H1 (cell line): ENCODE measurements at regions of chr3 and their contacts with region 1.

Region 1: DNA sequence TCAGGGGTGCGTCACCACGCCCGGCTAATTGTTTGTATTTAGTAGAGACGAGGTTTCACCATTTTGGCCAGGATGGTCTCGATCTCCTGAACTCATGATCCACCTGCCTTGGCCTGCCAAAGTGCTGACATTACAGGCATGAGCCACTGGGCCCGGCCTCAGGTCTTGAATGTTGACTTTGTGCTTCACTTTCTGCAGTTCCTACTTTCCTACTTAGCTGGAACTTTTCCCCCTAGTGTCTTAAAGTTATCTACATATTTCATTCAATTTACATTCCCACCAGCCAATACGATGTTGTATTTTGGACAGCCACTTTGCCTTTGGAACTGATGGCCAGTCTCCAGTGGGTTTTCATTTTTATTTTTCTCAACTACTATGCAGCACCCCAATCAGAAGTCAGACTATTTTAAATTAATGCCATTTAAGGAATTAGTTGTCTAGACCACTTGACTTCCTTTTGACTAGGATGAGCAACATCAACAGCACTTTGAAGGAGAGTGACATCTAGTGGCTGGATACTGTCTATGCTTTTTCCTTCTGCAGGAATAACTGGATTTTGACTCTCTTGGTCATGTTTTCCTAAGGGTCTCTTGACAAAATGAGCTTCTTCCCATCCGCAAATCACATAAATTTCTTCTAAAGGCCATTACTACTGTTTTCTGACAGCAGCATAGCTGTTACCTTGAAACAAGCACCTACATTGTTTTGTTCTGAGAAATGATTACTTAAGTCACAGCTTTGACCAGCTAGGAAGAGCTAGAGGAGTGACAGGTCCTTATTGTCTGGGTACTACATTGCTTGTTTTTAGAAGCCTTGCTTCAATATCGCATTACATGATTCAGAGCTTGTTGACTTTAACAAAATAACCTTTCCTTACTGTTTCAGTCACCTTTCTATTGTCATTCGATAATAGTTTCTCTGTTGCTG is 140.2 kb downstream of the ITPR1 start:
- DNase-seq: no peak
- H3K4me3 ChIP-seq: no peak overlapping the region
- H3K27ac ChIP-seq: no peak overlapping the region
- H3K4me1 ChIP-seq: no peaks in the 10 kb centered on the region; a peak in 1 of 7 replicates
- H3K27me3 ChIP-seq: no peaks in the 10 kb centered on the region
- CTCF ChIP-seq: peak in 2 of 3 experiments; percentile 73 to 78; a peak in 3 of 4 replicates
- EP300 ChIP-seq: no peak
- POLR2A ChIP-seq: no peak
- RAD21 ChIP-seq: peak; percentile 87 to 90

Region 2: GRCh38 chr3:4334548-4334947 is 298.8 kb before region 1 on chr3:
- CTCF ChIA-PET with region 1: interaction called, 21 read pairs
- POLR2A ChIA-PET with region 1: interaction called, 4 read pairs
- DNase-seq: no peak
- H3K4me3 ChIP-seq: no peak overlapping the region
- H3K27ac ChIP-seq: no peak overlapping the region
- H3K4me1 ChIP-seq: peaks cover 1 to 11% (median 6%) of the 10 kb centered on the region in 4 experiments; a peak in 4 of 7 replicates
- H3K27me3 ChIP-seq: no peaks in the 10 kb centered on the region
- CTCF ChIP-seq: peak in 2 of 3 experiments; percentile 30 to 48; a peak in 3 of 4 replicates
- EP300 ChIP-seq: no peak
- POLR2A ChIP-seq: no peak
- RAD21 ChIP-seq: peak; percentile 26 to 40; a peak in 3 of 4 replicates

Region 3: DNA sequence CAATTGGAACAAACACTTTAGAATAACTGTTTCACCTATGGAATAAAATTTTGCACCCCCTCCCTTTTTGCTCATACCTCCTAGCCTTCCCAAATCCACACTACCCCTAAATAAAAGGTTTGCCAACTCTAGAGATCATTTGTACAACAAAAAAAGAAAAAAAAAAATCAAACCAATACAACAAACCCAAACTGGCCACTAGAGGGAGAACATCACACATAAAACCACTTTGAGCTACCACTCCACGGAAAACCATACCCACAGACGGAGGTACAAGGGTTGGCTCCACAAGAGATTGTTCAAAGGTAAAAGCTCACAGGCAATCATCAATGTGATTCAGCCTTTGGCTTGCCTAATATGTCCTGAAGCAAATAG is 282.6 kb before region 1 on chr3:
- CTCF ChIA-PET with region 1: interaction called, 47 read pairs
- POLR2A ChIA-PET with region 1: no interaction called
- DNase-seq: no peak
- H3K4me3 ChIP-seq: no peak overlapping the region
- H3K27ac ChIP-seq: no peak overlapping the region
- H3K4me1 ChIP-seq: no peaks in the 10 kb centered on the region
- H3K27me3 ChIP-seq: no peaks in the 10 kb centered on the region
- CTCF ChIP-seq: peak in 2 of 3 experiments; percentile 58 to 71; a peak in 2 of 4 replicates
- EP300 ChIP-seq: no peak
- POLR2A ChIP-seq: no peak
- RAD21 ChIP-seq: peak; percentile 79 to 82

Region 4: GRCh38 chr3:4524088-4525023 is 109.0 kb before region 1 on chr3:
- CTCF ChIA-PET with region 1: interaction called, 13 read pairs
- POLR2A ChIA-PET with region 1: no interaction called
- DNase-seq: no peak
- H3K4me3 ChIP-seq: no peak overlapping the region
- H3K27ac ChIP-seq: no peak overlapping the region
- H3K4me1 ChIP-seq: no peaks in the 10 kb centered on the region
- H3K27me3 ChIP-seq: no peaks in the 10 kb centered on the region
- CTCF ChIP-seq: no peak
- EP300 ChIP-seq: no peak
- POLR2A ChIP-seq: no peak
- RAD21 ChIP-seq: no peak

Region 5: DNA sequence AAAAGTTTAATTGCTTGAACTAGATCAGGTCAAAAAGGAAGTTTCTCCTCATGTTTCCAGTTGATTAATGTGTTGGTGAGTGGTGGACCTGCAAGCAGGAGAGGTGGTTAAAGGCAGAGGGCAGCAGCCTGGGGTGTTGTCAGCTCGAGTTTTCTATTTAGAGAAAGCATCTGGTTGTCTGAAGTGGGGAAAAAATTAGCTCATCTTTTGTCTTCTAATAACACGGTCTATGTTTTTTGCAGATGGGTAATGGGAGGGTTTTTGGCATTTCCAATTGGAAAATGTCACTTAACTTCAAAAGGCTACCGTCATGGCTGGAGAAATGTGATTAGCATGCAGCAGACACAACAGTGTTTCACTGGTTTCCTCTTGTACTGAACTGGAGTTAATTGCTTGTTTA is 17.6 kb before region 1 on chr3:
- CTCF ChIA-PET with region 1: interaction called, 13 read pairs
- POLR2A ChIA-PET with region 1: no interaction called
- DNase-seq: no peak
- H3K4me3 ChIP-seq: no peak overlapping the region
- H3K27ac ChIP-seq: no peak overlapping the region
- H3K4me1 ChIP-seq: no peaks in the 10 kb centered on the region
- H3K27me3 ChIP-seq: no peaks in the 10 kb centered on the region
- CTCF ChIP-seq: no peak
- EP300 ChIP-seq: no peak
- POLR2A ChIP-seq: no peak
- RAD21 ChIP-seq: no peak